Endothelial cell of umbilical vein (primary cell): ENCODE measurements at regions of chr5 and their contacts with region 1.

Region 1: DNA sequence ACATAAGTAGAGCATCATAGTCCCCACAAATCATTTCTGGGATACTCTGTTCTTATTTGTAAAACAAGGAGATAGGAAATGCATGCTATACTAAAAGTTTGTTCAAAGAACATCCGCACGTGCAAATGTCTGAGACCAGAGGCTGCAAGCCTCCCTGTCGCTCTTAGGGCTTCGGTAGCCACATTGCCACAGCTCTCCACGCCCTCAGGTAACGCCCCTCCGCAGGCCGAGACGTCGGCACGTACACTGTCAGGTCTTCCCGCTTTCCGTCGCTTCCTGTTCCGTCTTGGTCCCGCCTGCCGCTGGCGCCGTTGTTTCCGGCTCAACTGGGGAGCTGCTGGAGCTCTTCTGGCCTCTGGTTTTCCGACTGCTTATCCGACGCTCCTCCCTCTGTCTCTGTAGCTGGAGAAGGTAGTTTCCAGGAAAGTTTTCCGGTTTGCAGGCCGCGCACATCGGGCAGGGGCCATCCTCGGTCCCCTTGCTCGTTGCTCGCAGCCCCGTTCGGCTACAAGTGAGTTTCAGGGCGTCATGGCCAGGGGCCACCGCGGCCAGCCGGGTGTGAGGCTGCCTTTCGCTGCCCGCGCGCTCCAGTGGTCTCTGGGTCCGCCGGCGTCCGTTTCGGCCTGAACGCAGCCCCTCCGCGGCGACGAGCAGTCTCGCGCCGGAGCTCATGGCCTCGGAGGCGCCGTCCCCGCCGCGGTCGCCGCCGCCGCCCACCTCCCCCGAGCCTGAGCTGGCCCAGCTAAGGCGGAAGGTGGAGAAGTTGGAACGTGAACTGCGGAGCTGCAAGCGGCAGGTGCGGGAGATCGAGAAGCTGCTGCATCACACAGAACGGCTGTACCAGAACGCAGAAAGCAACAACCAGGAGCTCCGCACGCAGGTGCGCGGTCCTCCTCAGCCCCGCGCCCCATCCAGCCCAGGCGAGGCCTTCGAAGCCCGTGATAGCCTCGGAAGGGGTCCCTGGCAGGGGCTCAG is at the start of gene AGGF1:
- DNase-seq: peak; percentile 93
- H3K4me3 ChIP-seq: peak within 1 kb of the TSS; percentile 71 to 77 (median 76)
- H3K27ac ChIP-seq: peak within 1 kb of the TSS; percentile 74
- H3K4me1 ChIP-seq: peaks cover 11% of the 10 kb centered on the region
- H3K27me3 ChIP-seq: no peaks in the 10 kb centered on the region
- CTCF ChIP-seq: no peak
- POLR2A ChIP-seq: peak; percentile 89
- total RNA-seq, gene AGGF1: 16.1 and 19.9 TPM in 2 replicates

Region 2: DNA sequence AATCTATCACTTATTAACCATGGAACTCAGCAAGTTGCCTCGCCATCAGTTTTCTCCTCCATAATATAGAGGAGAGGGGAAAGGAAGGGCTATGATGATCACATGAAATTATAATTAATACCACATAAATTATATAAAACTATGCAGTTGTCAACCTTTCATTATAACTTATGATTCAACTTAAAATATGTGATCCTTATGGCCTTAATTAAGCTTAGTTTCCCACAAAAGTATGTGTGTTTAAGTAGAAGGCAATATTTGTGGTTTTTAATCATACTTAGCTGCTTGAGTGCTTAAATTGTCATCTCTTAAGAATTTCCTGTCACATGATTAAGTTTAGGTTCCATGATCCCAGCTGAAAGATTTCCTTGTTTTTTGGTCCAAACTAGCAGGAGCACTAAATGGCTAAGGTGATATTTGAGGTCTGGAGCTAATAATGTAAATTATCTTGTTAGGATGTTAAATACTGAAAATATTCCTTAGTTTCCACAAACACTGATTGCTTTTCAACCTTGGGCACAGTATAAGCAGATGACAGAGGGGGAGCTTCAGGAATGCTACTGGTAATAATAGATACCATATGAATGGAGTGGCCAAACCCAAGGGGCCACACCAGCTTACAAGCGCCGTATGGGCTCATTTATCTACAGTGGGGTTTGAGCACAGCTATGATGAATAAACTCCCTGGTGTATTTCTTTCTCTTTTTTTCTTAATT is 340.9 kb before region 1 on chr5:
- CTCF ChIA-PET with region 1: no interaction called
- POLR2A ChIA-PET with region 1: no interaction called
- dilution Hi-C with region 1: no loop called
- intact Hi-C with region 1: no loop called
- DNase-seq: peak; percentile 86
- H3K4me3 ChIP-seq: no peak overlapping the region
- H3K27ac ChIP-seq: peak overlapping the region; percentile 91
- H3K4me1 ChIP-seq: peaks cover 69% of the 10 kb centered on the region
- H3K27me3 ChIP-seq: no peaks in the 10 kb centered on the region
- CTCF ChIP-seq: no peak
- POLR2A ChIP-seq: no peak

Region 3: GRCh38 chr5:76958991-76959767 is 71.2 kb before region 1 on chr5:
- CTCF ChIA-PET with region 1: no interaction called
- POLR2A ChIA-PET with region 1: no interaction called
- dilution Hi-C with region 1: no loop called
- intact Hi-C with region 1: loop called (anchors 1 kb)
- DNase-seq: peak; percentile 83
- H3K4me3 ChIP-seq: peak overlapping the region in 1 of 3 experiments; percentile 26
- H3K27ac ChIP-seq: peak overlapping the region; percentile 9
- H3K4me1 ChIP-seq: peaks cover 15% of the 10 kb centered on the region
- H3K27me3 ChIP-seq: peaks cover 12 to 13% of the 10 kb centered on the region in 2 experiments
- CTCF ChIP-seq: no peak
- POLR2A ChIP-seq: no peak

Region 4: GRCh38 chr5:77101298-77101697 is 70.9 kb after region 1 on chr5:
- CTCF ChIA-PET with region 1: no interaction called
- POLR2A ChIA-PET with region 1: no interaction called
- dilution Hi-C with region 1: no loop called
- intact Hi-C with region 1: no loop called
- DNase-seq: no peak
- H3K4me3 ChIP-seq: no peak overlapping the region
- H3K27ac ChIP-seq: no peak overlapping the region
- H3K4me1 ChIP-seq: no peaks in the 10 kb centered on the region
- H3K27me3 ChIP-seq: no peaks in the 10 kb centered on the region
- CTCF ChIP-seq: no peak
- POLR2A ChIP-seq: no peak